MCF 10A (cell line): ENCODE measurements at regions of chr19 and their contacts with region 1.

Region 1: GRCh38 chr19:50461066-50461875 is 15.0 kb upstream of the EMC10 start:
- DNase-seq: peak; percentile 78
- H3K4me3 Mint-ChIP-seq: no peak overlapping the region
- H3K27ac Mint-ChIP-seq: no peak overlapping the region
- H3K4me1 Mint-ChIP-seq: no peaks in the 10 kb centered on the region
- H3K27me3 Mint-ChIP-seq: peaks cover 14% of the 10 kb centered on the region
- CTCF ChIP-seq: peak; percentile 81

Region 2: GRCh38 chr19:50357178-50358100 is 103.8 kb before region 1 on chr19:
- CTCF ChIA-PET with region 1: interaction called, 27 read pairs
- POLR2A ChIA-PET with region 1: no interaction called
- intact Hi-C with region 1: loop called (anchors 2 kb)
- DNase-seq: peak; percentile 61
- H3K4me3 Mint-ChIP-seq: peak overlapping the region; percentile 67
- H3K27ac Mint-ChIP-seq: no peak overlapping the region
- H3K4me1 Mint-ChIP-seq: no peaks in the 10 kb centered on the region
- H3K27me3 Mint-ChIP-seq: no peaks in the 10 kb centered on the region
- CTCF ChIP-seq: peak; percentile 87

Region 3: DNA sequence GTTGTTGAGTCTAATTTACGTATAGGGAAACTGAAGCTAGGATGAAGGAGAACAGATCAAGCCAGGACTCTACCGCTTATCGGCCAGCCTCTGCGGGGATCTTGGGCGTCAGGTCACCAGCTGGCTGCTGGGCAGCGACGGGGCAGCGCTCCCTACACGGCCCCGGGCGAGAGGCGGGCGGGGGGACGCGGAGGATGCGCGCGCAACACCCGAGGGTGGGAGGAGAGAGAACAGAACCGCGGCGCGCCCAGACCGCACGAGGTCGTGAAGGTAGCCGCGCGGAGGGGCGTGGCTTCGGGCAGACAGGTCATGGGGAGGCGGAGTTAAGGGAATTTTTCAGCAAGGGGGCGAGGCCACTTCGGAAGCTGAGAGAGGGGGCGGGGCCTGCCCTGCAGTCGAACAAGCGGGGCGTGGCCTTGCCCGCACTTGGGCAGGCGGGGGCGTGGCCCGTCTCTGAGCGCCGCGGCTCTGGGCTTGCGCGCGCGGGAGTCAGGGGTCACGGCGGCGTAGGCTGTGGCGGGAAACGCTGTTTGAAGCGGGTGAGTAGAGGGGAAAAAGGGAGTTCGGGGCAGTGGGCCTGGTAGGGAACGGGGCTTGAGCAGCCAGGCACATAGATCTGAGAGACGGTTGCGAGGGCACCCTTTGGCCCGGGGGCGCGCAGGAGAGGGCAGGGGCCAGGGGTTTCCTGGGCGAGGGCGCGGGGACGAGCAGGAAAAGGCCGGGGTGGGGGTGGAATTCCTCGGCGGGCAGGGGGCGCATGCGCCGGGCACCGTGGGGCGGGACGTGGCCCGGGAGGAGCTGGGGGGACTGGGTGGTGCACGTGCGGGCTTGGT is 77.2 kb before region 1 on chr19 and contains the start of gene POLD1:
- CTCF ChIA-PET with region 1: no interaction called
- POLR2A ChIA-PET with region 1: interaction called, 10 read pairs
- intact Hi-C with region 1: no loop called
- DNase-seq: peak; percentile 98
- H3K4me3 Mint-ChIP-seq: peak within 1 kb of the TSS; percentile 85
- H3K27ac Mint-ChIP-seq: peak within 1 kb of the TSS; percentile 72
- H3K4me1 Mint-ChIP-seq: peaks cover 22% of the 10 kb centered on the region
- H3K27me3 Mint-ChIP-seq: no peaks in the 10 kb centered on the region
- CTCF ChIP-seq: no peak
- total RNA-seq, gene POLD1: 18.9 and 31.9 TPM in 2 replicates

Region 4: DNA sequence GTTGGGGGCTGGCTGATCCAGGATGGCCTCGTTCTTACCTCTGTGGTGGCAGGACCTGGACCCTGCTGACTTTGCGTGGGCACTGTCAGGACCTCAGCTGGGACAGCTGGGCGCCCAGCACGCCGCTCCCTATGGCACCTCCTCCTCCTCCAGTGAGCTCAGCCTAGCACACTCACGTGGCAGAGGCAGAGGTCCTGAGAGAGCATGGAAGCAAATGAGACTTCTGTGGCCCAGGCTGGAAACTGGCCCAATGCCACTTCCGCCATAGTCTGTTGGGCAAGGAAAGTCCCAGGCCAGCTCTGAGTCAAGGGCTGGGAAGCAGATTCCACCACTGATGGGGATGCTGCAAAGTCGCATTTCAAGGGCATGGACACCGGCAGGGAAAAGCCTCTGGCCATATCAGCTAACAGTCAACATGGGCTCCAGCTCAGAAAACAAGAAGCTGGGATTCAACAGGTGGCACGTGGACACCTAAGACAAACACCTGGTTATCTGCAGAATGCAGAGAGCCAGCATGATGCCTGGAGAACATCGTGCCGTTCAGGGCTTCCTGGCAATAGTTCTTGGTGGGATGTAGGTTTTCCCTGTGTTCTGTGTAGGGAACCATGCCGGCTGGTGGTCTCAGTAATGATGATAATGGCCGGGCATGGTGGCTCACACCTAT is 11.9 kb before region 1 on chr19:
- CTCF ChIA-PET with region 1: interaction called, 10 read pairs
- POLR2A ChIA-PET with region 1: no interaction called
- intact Hi-C with region 1: no loop called
- DNase-seq: no peak
- H3K4me3 Mint-ChIP-seq: no peak overlapping the region
- H3K27ac Mint-ChIP-seq: no peak overlapping the region
- H3K4me1 Mint-ChIP-seq: no peaks in the 10 kb centered on the region
- H3K27me3 Mint-ChIP-seq: peaks cover 11% of the 10 kb centered on the region
- CTCF ChIP-seq: no peak